Activated CD4-positive, alpha-beta T cell treated with anti-CD3 and anti-CD28 coated beads, Interleukin-2, amount 10 ng/mL, durations not matched to agents 7 days and 5 days (primary cell): ENCODE measurements at regions of chr9 and their contacts with region 1.

Region 1: DNA sequence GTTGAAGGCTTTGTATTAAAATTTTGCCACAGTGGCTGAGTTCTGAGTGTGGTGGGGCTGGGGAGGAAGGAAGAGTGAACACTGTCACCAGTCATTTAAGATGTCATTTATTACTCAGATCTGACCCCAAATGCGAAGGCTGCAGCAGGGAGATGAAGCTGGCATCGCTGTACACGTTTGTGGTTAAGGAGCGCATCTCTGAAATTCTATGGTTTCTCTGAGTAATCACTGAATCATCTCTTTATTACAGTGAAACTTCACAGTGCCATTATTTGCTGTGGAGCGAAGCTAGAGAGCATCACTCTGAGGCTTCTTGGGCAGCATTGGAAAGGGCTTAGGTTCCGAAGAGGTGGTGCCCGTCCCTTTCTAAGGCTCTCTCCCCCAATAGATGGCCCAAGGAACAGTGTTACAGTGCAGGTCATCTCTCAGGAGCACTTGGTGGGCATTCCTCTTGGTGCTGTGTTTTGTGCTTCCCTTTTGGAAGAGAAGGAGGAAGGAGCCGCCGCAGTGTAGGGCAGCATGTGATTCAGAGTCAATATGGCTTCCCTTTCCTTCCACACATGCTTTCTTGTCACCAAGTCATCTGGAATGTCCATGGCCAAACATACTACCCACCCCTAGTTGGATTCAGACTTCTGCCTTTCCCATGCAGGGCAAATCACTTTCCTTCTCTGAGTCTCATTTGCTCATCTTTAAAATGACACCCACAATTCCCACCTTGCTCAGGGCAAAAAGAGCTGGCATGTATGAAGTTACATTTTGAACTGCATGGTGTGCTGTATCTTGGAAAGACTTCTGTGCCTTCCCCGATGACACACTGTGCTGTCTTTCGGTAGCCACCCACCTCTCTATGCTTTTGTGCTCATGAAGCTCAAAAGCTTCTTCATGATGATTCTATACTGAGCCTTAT is 9.3 kb upstream of the TEX48 start:
- DNase-seq: peak; percentile 83
- H3K4me3 Mint-ChIP-seq: peak overlapping the region; percentile 44
- H3K27ac Mint-ChIP-seq: peak overlapping the region; percentile 93
- H3K4me1 Mint-ChIP-seq: peaks cover 90% of the 10 kb centered on the region
- H3K27me3 Mint-ChIP-seq: no peaks in the 10 kb centered on the region

Region 2: GRCh38 chr9:114721491-114722079 is 30.3 kb after region 1 on chr9:
- CTCF ChIA-PET with region 1: interaction called, 29 read pairs
- POLR2A ChIA-PET with region 1: interaction called, 7 read pairs
- DNase-seq: no peak
- H3K4me3 Mint-ChIP-seq: no peak overlapping the region
- H3K27ac Mint-ChIP-seq: peak overlapping the region; percentile 97
- H3K4me1 Mint-ChIP-seq: peaks cover 88% of the 10 kb centered on the region
- H3K27me3 Mint-ChIP-seq: no peaks in the 10 kb centered on the region

Region 3: GRCh38 chr9:114738581-114739316 is 47.4 kb after region 1 on chr9:
- CTCF ChIA-PET with region 1: interaction called, 10 read pairs
- POLR2A ChIA-PET with region 1: interaction called, 4 read pairs
- DNase-seq: peak; percentile 77
- H3K4me3 Mint-ChIP-seq: no peak overlapping the region
- H3K27ac Mint-ChIP-seq: peak overlapping the region; percentile 74
- H3K4me1 Mint-ChIP-seq: peaks cover 61% of the 10 kb centered on the region
- H3K27me3 Mint-ChIP-seq: no peaks in the 10 kb centered on the region

Region 4: GRCh38 chr9:114759512-114760341 is 68.4 kb after region 1 on chr9:
- CTCF ChIA-PET with region 1: no interaction called
- POLR2A ChIA-PET with region 1: no interaction called
- DNase-seq: no peak
- H3K4me3 Mint-ChIP-seq: no peak overlapping the region
- H3K27ac Mint-ChIP-seq: no peak overlapping the region
- H3K4me1 Mint-ChIP-seq: peaks cover 18% of the 10 kb centered on the region
- H3K27me3 Mint-ChIP-seq: peaks cover 3% of the 10 kb centered on the region